GM13976 (cell line): ENCODE measurements at regions of chr19 and their contacts with region 1.

Region 1: GRCh38 chr19:48970923-48971395 is 5.8 kb downstream of the FTL start:
- DNase-seq: peak; percentile 81
- CTCF ChIP-seq: peak; percentile 95

Region 2: GRCh38 chr19:48794291-48794966 is 176.5 kb before region 1 on chr19:
- in situ Hi-C with region 1: loop called (anchors 5 kb)
- DNase-seq: peak; percentile 21
- CTCF ChIP-seq: no peak

Region 3: DNA sequence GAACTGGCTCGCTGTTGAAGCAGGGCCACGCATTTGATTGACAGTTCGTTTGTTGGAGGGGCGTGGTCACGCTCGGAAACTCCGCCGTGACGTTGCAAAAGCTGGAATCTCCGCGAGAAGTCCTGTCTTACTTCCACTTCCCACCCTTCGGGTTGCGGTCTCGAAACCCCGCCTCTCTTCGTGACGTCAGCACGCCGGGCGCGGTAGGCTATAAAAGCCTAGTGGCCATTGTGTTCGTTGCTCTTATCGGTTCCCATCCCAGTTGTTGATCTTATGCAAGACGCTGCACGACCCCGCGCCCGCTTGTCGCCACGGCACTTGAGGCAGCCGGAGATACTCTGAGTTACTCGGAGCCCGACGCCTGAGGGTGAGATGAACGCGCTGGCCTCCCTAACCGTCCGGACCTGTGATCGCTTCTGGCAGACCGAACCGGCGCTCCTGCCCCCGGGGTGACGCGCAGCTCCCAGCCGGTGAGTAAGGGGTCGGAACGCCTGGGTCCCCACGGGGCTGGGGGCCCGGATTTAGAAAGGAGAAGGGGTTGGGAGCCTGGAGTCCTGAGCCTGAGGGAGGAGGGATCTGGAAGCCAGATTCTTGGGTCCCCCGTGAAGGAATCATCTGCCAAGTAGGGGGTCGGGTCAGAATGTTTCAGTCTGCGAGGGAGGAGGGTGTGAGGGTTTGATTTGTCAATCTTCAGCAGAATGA is 98.6 kb before region 1 on chr19 and contains the start of gene PPP1R15A:
- in situ Hi-C with region 1: loop called (anchors 5 kb)
- DNase-seq: peak; percentile 98
- CTCF ChIP-seq: no peak

Region 4: DNA sequence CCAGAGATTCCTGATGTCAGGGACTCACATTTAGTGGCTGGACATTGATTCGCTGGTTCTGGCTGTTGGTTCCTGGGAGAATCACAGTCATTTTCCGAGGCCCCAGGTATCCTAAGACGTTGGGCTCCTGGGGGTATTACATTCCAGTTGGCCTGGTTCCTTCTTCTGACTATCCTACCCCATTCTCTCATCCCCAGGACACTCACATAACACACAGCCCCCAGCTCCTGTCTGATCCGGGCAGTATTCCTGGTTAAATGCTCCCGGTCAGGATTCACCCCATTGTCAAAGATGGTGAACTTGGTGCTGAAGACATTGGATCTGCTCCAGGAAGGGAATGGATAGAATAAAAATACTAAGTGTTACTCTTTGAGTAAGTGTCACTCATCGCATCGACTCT is 87.2 kb before region 1 on chr19:
- in situ Hi-C with region 1: no loop called
- DNase-seq: no peak
- CTCF ChIP-seq: no peak